GM12878 (cell line): ENCODE measurements at regions of chr2 and their contacts with region 1.

Region 1: GRCh38 chr2:70142590-70143313 is 48.1 kb downstream of the C2orf42 start:
- DNase-seq: peak; percentile 98
- ATAC-seq: peak; percentile 71
- H3K4me3 ChIP-seq: peak overlapping the region; percentile 60
- H3K27ac ChIP-seq: peak overlapping the region; percentile 97
- H3K4me1 ChIP-seq: peaks cover 38% of the 10 kb centered on the region
- H3K27me3 ChIP-seq: no peaks in the 10 kb centered on the region
- CTCF ChIP-seq: peak; percentile 97 to 100 (median 97); a peak in 5 of 6 replicates
- EP300 ChIP-seq: peak; percentile 35 to 94; a peak in 2 of 4 replicates
- POLR2A ChIP-seq: peak; percentile 26; the same call in 1 of the 2 replicates
- RAD21 ChIP-seq: peak; percentile 91

Region 2: DNA sequence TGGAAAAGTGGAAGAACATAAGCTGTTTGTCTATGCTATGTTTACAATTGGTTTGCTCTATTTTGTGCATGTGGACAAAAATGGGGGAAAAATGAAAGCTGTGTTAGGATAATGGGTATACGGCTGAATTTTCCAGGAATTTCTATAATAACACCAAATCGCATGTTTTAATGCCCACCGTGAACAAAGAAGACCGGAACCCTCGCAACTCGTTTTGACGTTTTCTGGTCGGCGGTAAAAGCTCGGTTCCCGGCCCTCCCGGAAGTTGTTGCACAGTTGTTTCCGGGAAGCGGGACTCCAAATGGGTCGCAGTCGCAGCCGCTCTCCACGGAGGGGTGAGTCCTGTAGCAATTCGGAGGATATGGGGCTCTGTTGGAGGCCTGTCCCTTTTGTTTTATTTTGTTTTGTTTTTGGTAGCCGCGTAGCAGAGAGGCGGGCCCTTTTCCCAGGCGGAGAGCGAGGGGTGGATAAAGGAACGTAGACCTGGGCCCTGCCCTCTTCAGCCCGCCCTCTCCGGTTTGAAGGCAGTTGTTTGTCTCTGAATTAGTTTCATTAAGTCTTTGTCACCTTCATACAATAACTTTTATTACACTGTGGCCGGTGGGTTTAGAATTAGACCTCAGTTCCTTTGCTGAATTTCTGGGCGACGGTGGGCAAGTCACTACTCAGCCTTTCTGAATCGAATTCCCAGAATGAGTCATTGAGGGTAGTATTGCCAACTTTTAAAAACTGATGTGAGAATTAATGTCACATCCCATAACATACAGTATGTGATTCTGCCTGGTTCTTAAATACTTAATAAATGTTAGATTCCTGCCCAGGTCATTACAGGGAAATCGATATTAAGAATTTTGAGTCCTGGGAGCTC is 248.8 kb before region 1 on chr2 and contains the start of gene SNRNP27:
- CTCF ChIA-PET with region 1: interaction called, 3 read pairs
- POLR2A ChIA-PET with region 1: no interaction called
- RAD21 ChIA-PET with region 1: interaction called, 11 read pairs
- SMC1A ChIA-PET with region 1: no interaction called
- in situ Hi-C with region 1: no loop called
- intact Hi-C with region 1: no loop called
- DNase-seq: peak; percentile 20
- ATAC-seq: peak; percentile 90
- H3K4me3 ChIP-seq: peak within 1 kb of the TSS; percentile 89
- H3K27ac ChIP-seq: peak within 1 kb of the TSS; percentile 85
- H3K4me1 ChIP-seq: 0 out of 2 replicates have a peak, but pooled peaks cover 3% of the 10 kb centered on the region
- H3K27me3 ChIP-seq: no peaks in the 10 kb centered on the region
- CTCF ChIP-seq: no peak
- EP300 ChIP-seq: no peak; a peak in 1 of 4 replicates
- POLR2A ChIP-seq: peak; percentile 80
- RAD21 ChIP-seq: no peak
- polyA plus RNA-seq, gene SNRNP27: 30.6 to 30.9 TPM

Region 3: GRCh38 chr2:70086838-70087701 is 55.7 kb before region 1 on chr2 and contains the start of gene PCBP1:
- CTCF ChIA-PET with region 1: interaction called, 11 read pairs
- POLR2A ChIA-PET with region 1: interaction called, 57 read pairs
- RAD21 ChIA-PET with region 1: interaction called, 181 read pairs
- SMC1A ChIA-PET with region 1: interaction called, 42 read pairs
- in situ Hi-C with region 1: loop called (anchors 5 kb)
- intact Hi-C with region 1: loop called (anchors 1 kb)
- DNase-seq: peak; percentile 84
- ATAC-seq: peak; percentile 25
- H3K4me3 ChIP-seq: peak within 1 kb of the TSS; percentile 92
- H3K27ac ChIP-seq: peak within 1 kb of the TSS; percentile 100
- H3K4me1 ChIP-seq: peaks cover 35% of the 10 kb centered on the region
- H3K27me3 ChIP-seq: no peaks in the 10 kb centered on the region
- CTCF ChIP-seq: no peak
- EP300 ChIP-seq: peak in 1 of 2 experiments; percentile 10; a peak in 1 of 4 replicates
- POLR2A ChIP-seq: no peak
- RAD21 ChIP-seq: 0 out of 2 replicates have a peak, but pooled peaks have one; percentile 0
- polyA plus RNA-seq, gene PCBP1: 24.4 to 28.9 TPM

Region 4: GRCh38 chr2:70115646-70116442 is 26.9 kb before region 1 on chr2:
- CTCF ChIA-PET with region 1: interaction called, 7 read pairs
- POLR2A ChIA-PET with region 1: interaction called, 263 read pairs
- RAD21 ChIA-PET with region 1: interaction called, 38 read pairs
- SMC1A ChIA-PET with region 1: interaction called, 311 read pairs
- in situ Hi-C with region 1: no loop called
- intact Hi-C with region 1: no loop called
- DNase-seq: no peak
- ATAC-seq: peak; percentile 78
- H3K4me3 ChIP-seq: peak overlapping the region; percentile 30; the same call in 1 of the 2 replicates
- H3K27ac ChIP-seq: peak overlapping the region; percentile 88
- H3K4me1 ChIP-seq: peaks cover 51% of the 10 kb centered on the region
- H3K27me3 ChIP-seq: no peaks in the 10 kb centered on the region
- CTCF ChIP-seq: peak in 1 of 3 experiments; percentile 27; a peak in 2 of 6 replicates
- EP300 ChIP-seq: 0 out of 4 replicates have a peak, but pooled peaks of 1 of the 2 experiments have one; percentile 34
- POLR2A ChIP-seq: no peak
- RAD21 ChIP-seq: no peak

Region 5: DNA sequence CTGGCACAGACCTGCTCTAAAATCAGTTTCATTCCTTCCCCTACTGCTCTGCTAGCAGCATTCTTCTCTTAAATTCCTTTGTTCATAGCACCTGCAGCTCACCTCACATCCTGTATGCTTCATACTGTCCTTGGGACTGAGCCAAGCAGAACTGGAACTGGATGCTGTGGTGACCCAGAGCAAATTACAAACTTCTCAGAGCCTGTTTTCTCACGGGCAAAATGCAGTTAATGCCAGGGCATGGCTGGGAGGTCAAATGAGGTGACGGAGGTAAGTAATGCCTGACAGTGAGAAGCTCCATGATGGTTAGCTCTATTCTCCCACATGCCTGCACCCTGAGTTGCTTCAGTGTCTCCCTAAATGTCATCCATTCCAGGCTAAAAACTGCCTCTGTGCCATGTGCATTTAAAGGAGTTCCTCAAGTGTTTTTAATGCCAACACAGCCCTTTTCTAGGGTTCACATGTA is 18.4 kb after region 1 on chr2:
- CTCF ChIA-PET with region 1: interaction called, 22 read pairs
- POLR2A ChIA-PET with region 1: interaction called, 9 read pairs
- RAD21 ChIA-PET with region 1: interaction called, 16 read pairs
- SMC1A ChIA-PET with region 1: interaction called, 38 read pairs
- in situ Hi-C with region 1: no loop called
- intact Hi-C with region 1: no loop called
- DNase-seq: peak; percentile 99
- ATAC-seq: peak; percentile 95
- H3K4me3 ChIP-seq: no peak overlapping the region; the same call in 1 of the 2 replicates
- H3K27ac ChIP-seq: peak overlapping the region; percentile 78
- H3K4me1 ChIP-seq: peaks cover 18% of the 10 kb centered on the region
- H3K27me3 ChIP-seq: no peaks in the 10 kb centered on the region
- CTCF ChIP-seq: no peak
- EP300 ChIP-seq: peak; percentile 56 to 86; a peak in 3 of 4 replicates
- POLR2A ChIP-seq: no peak
- RAD21 ChIP-seq: no peak

Region 6: DNA sequence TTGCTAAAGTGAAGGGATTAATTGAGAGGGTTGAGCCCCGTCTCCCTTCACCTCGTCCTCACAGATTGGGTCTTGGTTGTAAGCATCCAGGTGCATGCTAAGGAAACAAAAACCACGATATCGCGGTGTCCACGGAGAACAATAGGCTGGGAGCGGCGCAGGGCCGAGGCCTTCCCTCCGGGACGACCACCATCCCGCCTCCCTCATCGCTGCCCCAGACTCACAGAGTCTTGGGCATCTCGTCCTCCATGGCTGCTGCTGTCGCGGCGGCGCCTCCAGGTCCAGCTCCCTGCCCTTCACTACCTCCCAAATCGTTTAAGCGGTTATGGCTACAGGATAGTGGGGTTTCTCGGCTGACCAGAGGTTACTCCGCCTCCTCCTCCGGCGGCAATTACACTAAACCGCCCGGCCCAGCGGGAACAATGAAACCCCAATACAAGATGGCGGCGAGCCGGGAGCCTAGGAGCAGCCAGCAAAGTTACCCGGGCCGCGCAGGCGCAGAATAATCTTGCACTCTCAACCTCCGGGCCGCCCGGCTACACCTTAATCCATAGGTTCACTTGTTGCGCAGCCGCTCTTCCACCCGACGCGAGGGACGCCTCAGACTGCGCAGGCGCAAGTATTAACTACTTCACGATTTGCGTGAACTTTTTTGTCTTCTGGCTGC is 105.6 kb after region 1 on chr2 and contains the start of gene TIA1:
- CTCF ChIA-PET with region 1: interaction called, 3 read pairs
- POLR2A ChIA-PET with region 1: interaction called, 3 read pairs
- RAD21 ChIA-PET with region 1: interaction called, 3 read pairs
- SMC1A ChIA-PET with region 1: interaction called, 8 read pairs
- in situ Hi-C with region 1: no loop called
- intact Hi-C with region 1: loop called (anchors 2 kb)
- DNase-seq: peak; percentile 96
- ATAC-seq: peak; percentile 97
- H3K4me3 ChIP-seq: peak within 1 kb of the TSS; percentile 97
- H3K27ac ChIP-seq: peak within 1 kb of the TSS; percentile 96
- H3K4me1 ChIP-seq: no peaks in the 10 kb centered on the region
- H3K27me3 ChIP-seq: no peaks in the 10 kb centered on the region
- CTCF ChIP-seq: no peak
- EP300 ChIP-seq: no peak
- POLR2A ChIP-seq: peak; percentile 89
- RAD21 ChIP-seq: no peak
- polyA plus RNA-seq, gene TIA1: 21.5 to 23.2 TPM